AG04450 (cell line): ENCODE measurements at regions of chr6 and their contacts with region 1.

Region 1: GRCh38 chr6:31815025-31815838 is at the starts of genes HSPA1A and HSPA1L:
- DNase-seq: peak; percentile 85
- H3K4me3 ChIP-seq: peak within 1 kb of the TSS; percentile 83
- H3K27ac ChIP-seq: peak within 1 kb of the TSS; percentile 92
- H3K27me3 ChIP-seq: no peaks in the 10 kb centered on the region
- CTCF ChIP-seq: no peak
- polyA plus RNA-seq, gene HSPA1A: 46.6 and 50.4 TPM in 2 replicates
- polyA plus RNA-seq, gene HSPA1L: 1.1 and 1.2 TPM in 2 replicates

Region 2: DNA sequence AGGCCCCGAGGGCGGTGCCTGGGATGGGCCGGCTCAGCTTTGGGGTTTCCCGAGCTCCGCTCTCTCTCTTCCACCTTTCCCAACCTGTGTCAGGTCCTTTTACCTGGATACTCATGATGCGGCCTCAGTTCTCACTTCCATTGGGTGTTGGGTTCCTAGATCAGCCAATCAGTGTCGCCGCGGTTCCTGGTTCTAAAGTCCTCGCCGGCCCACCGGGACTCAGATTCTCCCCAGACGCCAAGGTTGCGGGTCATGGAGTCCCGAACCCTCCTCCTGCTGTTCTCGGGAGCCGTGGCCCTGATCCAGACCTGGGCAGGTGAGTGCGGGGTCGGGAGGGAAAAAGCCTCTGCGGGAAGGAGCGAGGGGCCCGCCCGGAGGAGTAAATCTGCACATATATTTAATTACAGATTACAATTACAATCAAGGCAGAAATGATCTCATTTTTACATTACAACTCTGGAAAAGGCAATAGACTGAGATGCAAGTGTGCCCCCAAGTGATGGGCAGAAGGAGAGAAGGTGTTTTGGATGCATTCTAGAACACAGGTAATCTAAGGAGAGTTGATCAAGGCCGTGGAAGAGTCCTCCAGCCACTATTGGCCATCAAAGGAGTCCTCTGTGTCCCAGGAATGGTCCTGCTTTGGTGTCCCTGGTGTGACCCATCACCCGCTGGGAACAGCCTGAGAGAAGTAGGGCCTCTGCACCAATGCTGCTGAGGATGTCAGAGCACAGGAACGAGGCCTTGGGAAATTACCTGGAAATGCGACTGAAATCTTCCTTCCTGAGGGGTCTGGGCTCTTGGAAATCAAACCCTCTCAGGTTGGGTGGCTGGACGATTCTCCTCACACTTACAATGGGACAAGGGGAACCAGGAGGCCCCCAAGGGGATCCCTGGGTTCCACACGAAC is 352.0 kb before region 1 on chr6:
- CTCF ChIA-PET with region 1: no interaction called
- POLR2A ChIA-PET with region 1: no interaction called
- DNase-seq: no peak
- H3K4me3 ChIP-seq: no peak overlapping the region; the same call in 1 of the 2 replicates
- H3K27ac ChIP-seq: no peak overlapping the region
- H3K27me3 ChIP-seq: peaks cover 21% of the 10 kb centered on the region
- CTCF ChIP-seq: no peak

Region 3: DNA sequence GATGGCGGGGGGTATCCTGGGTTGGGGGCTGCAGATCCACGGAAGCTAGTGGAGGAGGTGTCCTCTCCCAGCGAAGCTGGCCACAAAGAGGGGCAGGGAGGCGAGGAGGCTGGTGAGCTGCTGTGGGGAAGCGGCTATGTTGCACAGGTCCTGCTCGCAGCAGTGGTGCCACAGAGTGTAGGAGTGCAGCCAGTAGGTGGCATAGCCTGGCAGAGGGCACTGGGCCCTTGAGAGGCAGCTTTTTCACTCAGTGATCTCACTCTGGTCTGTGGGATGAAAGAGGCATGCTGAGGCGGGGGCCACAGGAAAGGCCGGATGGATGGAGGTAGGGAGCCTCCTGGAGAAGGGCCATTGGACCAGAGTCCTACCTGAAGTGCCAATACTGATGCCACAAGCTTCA is 102.9 kb before region 1 on chr6:
- CTCF ChIA-PET with region 1: no interaction called
- POLR2A ChIA-PET with region 1: no interaction called
- DNase-seq: no peak
- H3K4me3 ChIP-seq: no peak overlapping the region
- H3K27ac ChIP-seq: no peak overlapping the region
- H3K27me3 ChIP-seq: peaks cover 33% of the 10 kb centered on the region
- CTCF ChIP-seq: no peak

Region 4: GRCh38 chr6:31739639-31740396 is 75.4 kb before region 1 on chr6 and contains the start of gene MSH5:
- CTCF ChIA-PET with region 1: interaction called, 8 read pairs
- POLR2A ChIA-PET with region 1: interaction called, 10 read pairs
- DNase-seq: peak; percentile 98
- H3K4me3 ChIP-seq: peak within 1 kb of the TSS; percentile 90
- H3K27ac ChIP-seq: no peak within 1 kb of the TSS
- H3K27me3 ChIP-seq: no peaks in the 10 kb centered on the region
- CTCF ChIP-seq: no peak
- polyA plus RNA-seq, gene MSH5: 6.4 and 7.2 TPM in 2 replicates

Region 5: DNA sequence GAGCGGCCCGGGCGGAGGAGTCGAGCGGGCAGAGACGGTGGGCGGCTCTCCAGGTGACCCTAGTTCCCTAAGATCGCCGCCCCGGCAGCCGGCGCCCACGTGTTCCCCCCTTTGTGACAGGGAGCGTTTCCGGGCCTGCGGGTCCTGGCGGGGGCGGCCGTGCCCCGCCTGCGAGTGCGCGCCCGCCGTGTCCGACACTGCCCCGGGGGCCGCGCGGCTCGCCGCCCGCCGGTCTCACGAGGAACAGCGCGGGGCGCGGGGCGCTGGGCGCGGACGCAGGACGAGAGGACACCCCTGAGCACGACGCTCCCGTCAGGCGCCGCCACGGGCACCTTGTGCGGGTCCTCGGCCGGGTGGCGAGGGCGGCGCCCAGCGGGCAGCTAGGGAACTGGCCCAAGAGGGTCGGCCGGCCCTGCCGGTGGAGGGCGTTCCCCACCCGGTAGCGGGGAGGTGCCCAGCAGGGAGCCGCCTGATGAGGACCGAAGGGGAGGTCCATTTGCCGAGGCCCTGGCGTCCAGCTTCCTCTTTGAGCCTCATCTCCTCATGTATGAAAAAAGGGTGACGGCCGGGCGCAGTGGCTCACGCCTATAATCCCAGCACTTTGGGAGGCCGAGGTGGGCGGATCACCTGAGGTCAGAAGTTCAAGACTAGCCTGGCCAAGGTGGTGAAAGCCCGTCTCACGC is 19.5 kb before region 1 on chr6 and contains the start of gene VARS1:
- CTCF ChIA-PET with region 1: interaction called, 6 read pairs
- POLR2A ChIA-PET with region 1: interaction called, 10 read pairs
- DNase-seq: peak; percentile 62
- H3K4me3 ChIP-seq: peak within 1 kb of the TSS; percentile 84
- H3K27ac ChIP-seq: peak within 1 kb of the TSS; percentile 77
- H3K27me3 ChIP-seq: no peaks in the 10 kb centered on the region
- CTCF ChIP-seq: peak; percentile 72
- polyA plus RNA-seq, gene VARS1: 16.0 and 23.9 TPM in 2 replicates

Region 6: DNA sequence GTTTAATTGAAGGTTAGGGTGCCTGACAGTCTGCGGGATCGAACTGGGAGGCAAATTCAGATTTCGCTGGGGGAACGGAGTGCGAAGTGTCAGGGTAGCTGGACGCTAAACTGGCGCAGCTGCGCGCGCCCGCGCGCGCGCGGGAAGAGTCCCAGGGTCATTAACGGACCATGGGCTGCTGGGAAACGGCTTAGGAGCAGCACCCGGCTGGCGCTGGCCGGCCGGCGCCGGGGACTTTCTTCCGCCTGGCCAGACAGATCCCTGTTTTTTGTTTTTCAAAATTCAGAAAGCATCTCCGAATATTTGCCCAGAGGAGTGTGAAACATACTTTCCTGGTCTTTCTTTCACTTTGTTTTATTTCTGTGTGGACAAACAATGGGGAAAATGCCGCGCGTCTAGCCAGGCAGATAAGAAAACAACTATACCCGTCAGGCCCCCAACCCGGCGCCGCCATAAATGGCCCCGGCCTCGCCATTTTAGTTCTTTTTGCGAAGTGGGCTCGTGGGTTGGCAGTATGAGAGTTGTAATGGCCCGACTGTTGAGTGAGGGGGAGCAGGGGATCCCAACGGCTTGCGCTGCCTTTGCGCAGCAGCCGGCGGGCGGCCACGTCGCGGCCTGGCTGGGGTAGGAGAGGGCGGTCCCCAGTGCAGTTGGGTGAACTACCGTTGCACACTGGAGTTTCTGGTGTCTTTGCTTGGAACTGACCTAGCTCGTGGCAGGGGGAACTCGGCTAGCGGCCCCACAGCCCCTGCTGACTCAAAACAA is 19.4 kb after region 1 on chr6:
- CTCF ChIA-PET with region 1: interaction called, 7 read pairs
- POLR2A ChIA-PET with region 1: interaction called, 19 read pairs
- DNase-seq: no peak
- H3K4me3 ChIP-seq: peak overlapping the region; percentile 92
- H3K27ac ChIP-seq: peak overlapping the region; percentile 81
- H3K27me3 ChIP-seq: no peaks in the 10 kb centered on the region
- CTCF ChIP-seq: 0 out of 2 replicates have a peak, but pooled peaks have one; percentile 2